GM18951 (cell line): ENCODE measurements at regions of chr17 and their contacts with region 1.

Region 1: DNA sequence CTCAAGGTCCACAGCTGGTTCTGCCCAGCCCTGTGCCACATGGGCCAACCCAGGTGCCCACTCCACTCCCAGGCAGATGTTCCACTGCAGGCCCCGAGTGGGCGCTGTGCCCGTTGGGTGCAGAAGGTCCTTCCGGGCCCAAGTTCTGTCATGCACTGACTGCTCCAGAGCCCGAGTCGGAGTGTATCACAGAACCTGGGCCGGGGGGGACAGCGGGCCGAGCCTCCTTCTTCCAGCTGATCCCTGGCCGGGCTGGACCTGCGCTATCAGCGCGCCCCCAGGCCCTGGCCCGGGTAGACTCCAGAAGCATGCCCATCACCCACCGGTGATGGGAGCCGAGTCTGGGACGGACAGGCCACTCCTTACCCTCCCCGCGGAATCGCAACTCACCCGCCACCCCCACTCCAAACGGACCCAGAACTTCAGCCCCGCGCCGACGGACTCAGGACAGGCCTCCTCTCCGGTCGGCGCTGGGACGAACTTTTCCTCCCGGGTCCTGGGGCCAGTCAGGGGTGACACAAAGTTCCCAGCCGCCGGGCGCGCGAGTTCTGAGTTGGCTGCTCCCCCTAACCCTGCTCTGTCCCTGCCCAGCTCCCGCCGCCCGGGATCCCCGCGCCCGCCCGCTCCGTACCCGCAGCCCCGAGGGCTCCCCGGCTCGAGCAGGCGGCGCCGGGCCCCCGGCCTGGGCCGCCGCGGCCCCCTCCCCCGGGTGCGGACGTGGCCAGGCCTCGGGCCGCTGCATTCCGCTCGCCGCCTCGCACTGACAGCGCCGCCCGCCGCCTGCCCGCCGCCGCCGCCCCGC is at the start of gene COPZ2:
- POLR2A ChIP-seq: no peak

Region 2: GRCh38 chr17:48131216-48131824 is 94.1 kb after region 1 on chr17:
- in situ Hi-C with region 1: loop called (anchors 10 kb)
- POLR2A ChIP-seq: no peak